A673 (cell line): ENCODE measurements at regions of chr14 and their contacts with region 1.

Region 1: GRCh38 chr14:59507063-59507780 is 22.9 kb downstream of the JKAMP start:
- DNase-seq: peak; percentile 80
- H3K4me3 ChIP-seq: no peak overlapping the region
- H3K27ac ChIP-seq: no peak overlapping the region
- H3K4me1 ChIP-seq: no peaks in the 10 kb centered on the region
- H3K27me3 ChIP-seq: no peaks in the 10 kb centered on the region
- CTCF ChIP-seq: peak; percentile 97

Region 2: DNA sequence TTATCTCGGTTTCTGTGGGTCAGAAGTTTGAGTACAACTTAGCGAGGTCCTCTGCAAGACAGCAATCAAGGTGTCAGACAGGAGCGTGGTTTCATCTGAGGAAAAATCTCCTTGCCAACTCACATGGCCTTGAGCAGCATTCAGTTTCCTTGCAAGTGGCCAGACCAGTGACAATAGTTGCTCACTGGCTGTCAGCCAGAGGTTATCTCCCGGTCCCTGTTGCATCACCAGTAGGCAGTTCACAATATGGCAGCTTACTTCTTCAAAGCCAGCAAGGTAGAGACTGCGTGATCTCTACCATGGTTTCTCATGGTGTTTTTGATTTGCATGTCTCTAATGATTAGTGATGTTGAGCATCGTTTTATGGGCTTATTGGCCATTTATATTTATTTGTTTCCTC is 462.5 kb before region 1 on chr14:
- CTCF ChIA-PET with region 1: interaction called, 16 read pairs
- POLR2A ChIA-PET with region 1: no interaction called
- intact Hi-C with region 1: no loop called
- DNase-seq: no peak
- H3K4me3 ChIP-seq: no peak overlapping the region
- H3K27ac ChIP-seq: no peak overlapping the region
- H3K4me1 ChIP-seq: no peaks in the 10 kb centered on the region
- H3K27me3 ChIP-seq: peaks cover 7% of the 10 kb centered on the region
- CTCF ChIP-seq: no peak

Region 3: DNA sequence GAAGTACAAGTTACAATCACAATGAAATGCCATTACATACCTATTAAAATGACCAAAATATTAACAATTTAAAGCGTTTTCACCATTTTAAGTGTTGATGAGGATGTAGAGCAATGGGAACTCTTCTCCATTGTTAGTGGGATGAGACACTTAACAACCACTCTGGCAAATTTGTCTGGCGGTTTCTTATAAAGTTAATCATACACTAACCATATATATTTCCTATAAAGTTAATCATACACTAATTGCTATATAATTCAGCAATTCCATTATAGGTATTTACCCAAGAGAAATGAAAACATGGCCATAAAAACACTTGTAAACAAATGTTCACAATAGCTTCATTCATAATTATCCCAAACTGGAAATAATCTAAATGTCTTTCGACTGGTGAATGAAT is 13.0 kb after region 1 on chr14:
- CTCF ChIA-PET with region 1: no interaction called
- POLR2A ChIA-PET with region 1: no interaction called
- intact Hi-C with region 1: no loop called
- DNase-seq: no peak
- H3K4me3 ChIP-seq: no peak overlapping the region
- H3K27ac ChIP-seq: no peak overlapping the region
- H3K4me1 ChIP-seq: no peaks in the 10 kb centered on the region
- H3K27me3 ChIP-seq: no peaks in the 10 kb centered on the region
- CTCF ChIP-seq: no peak

Region 4: DNA sequence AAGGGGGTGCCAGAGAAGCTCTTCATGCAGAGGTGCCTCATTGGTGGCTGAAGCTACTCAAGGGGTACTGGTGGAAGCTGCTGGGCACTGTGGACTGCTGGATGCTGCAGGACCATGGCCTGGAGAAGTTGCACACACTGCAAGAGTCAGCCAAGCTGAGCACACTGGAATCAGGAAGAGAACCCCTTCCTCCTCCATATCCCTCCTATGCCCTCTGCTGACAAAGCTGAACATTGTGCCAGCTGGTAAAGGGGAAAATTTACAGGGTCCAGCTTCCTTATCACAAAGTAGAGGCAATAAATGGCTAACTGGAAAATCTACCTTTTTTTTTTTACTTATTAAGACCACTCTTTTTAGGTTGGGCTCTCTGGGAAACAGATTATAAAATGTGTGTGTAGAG is 62.9 kb after region 1 on chr14:
- CTCF ChIA-PET with region 1: interaction called, 26 read pairs
- POLR2A ChIA-PET with region 1: no interaction called
- intact Hi-C with region 1: loop called (anchors 2 kb)
- DNase-seq: peak; percentile 56
- H3K4me3 ChIP-seq: no peak overlapping the region
- H3K27ac ChIP-seq: no peak overlapping the region
- H3K4me1 ChIP-seq: peaks cover under 1% of the 10 kb centered on the region
- H3K27me3 ChIP-seq: no peaks in the 10 kb centered on the region
- CTCF ChIP-seq: peak; percentile 62

Region 5: DNA sequence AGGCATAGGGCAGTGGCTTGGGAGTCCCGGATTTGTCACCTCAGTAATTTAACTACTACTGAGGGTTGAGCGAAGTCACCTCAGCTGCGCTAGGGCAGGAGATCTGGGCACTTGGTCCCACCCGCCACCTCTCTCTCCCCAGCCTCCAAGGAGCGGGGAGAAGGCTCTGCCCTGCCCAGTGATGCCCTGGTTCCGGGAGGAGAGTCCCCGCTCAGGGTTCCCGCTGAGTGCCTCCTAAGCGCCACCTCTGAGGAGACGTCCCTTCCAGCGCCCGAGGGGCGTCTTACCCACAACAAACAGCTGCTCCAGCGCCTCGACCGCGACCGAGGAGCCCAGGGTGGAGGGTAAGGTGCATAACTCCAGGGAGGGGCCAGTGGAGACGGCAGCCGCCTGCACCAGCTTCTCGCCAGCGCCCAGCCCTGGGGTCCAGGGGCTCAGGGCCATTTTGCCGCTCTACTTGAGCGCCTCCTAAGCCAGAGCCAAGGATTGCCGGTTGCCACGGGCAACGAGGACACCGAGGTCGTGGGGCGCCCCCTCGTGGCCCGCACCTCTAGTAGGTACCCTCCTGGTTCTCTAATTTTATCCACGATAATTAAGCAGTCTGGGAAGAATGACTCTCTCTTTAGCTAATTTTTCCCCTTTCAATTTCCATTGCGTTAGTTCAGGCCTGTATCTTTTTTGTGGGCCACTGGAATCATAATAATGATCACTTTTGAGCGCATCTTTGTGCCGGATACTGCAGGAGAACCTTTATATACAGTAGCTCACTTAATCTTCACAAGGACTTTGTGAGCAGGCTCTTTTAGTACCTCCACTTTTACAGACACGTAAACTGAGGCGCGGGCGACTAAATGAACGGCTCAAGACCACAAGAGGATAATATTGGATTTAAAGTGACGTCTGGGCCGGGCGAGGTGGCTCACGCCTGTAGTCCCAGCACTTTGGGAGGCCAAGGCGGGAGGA is 69.4 kb after region 1 on chr14 and contains the start of gene CCDC175:
- CTCF ChIA-PET with region 1: interaction called, 7 read pairs
- POLR2A ChIA-PET with region 1: no interaction called
- intact Hi-C with region 1: loop called (anchors 2 kb)
- DNase-seq: peak; percentile 69
- H3K4me3 ChIP-seq: no peak within 1 kb of the TSS
- H3K27ac ChIP-seq: no peak within 1 kb of the TSS
- H3K4me1 ChIP-seq: no peaks in the 10 kb centered on the region
- H3K27me3 ChIP-seq: no peaks in the 10 kb centered on the region
- CTCF ChIP-seq: peak; percentile 76
- total RNA-seq, gene CCDC175: 0.47 TPM in 1 of 2 replicates, not detected in the other

Region 6: GRCh38 chr14:59688224-59689170 is 181.3 kb after region 1 on chr14:
- CTCF ChIA-PET with region 1: interaction called, 9 read pairs
- POLR2A ChIA-PET with region 1: no interaction called
- intact Hi-C with region 1: loop called (anchors 1 kb)
- DNase-seq: peak; percentile 85
- H3K4me3 ChIP-seq: no peak overlapping the region
- H3K27ac ChIP-seq: no peak overlapping the region
- H3K4me1 ChIP-seq: no peaks in the 10 kb centered on the region
- H3K27me3 ChIP-seq: no peaks in the 10 kb centered on the region
- CTCF ChIP-seq: peak; percentile 94

Region 7: GRCh38 chr14:59897761-59898383 is 390.6 kb after region 1 on chr14:
- CTCF ChIA-PET with region 1: interaction called, 10 read pairs
- POLR2A ChIA-PET with region 1: no interaction called
- intact Hi-C with region 1: loop called (anchors 5 kb)
- DNase-seq: peak; percentile 67
- H3K4me3 ChIP-seq: no peak overlapping the region
- H3K27ac ChIP-seq: no peak overlapping the region
- H3K4me1 ChIP-seq: no peaks in the 10 kb centered on the region
- H3K27me3 ChIP-seq: no peaks in the 10 kb centered on the region
- CTCF ChIP-seq: peak; percentile 63

Region 8: GRCh38 chr14:60184146-60184904 is 677.1 kb after region 1 on chr14:
- CTCF ChIA-PET with region 1: no interaction called
- POLR2A ChIA-PET with region 1: no interaction called
- intact Hi-C with region 1: loop called (anchors 5 kb)
- DNase-seq: peak; percentile 81
- H3K4me3 ChIP-seq: peak overlapping the region; percentile 34
- H3K27ac ChIP-seq: no peak overlapping the region
- H3K4me1 ChIP-seq: peaks cover 11% of the 10 kb centered on the region
- H3K27me3 ChIP-seq: no peaks in the 10 kb centered on the region
- CTCF ChIP-seq: peak; percentile 84